ENCODE measurements at regions of chr7 and their contacts with region 1.

Region 1: DNA sequence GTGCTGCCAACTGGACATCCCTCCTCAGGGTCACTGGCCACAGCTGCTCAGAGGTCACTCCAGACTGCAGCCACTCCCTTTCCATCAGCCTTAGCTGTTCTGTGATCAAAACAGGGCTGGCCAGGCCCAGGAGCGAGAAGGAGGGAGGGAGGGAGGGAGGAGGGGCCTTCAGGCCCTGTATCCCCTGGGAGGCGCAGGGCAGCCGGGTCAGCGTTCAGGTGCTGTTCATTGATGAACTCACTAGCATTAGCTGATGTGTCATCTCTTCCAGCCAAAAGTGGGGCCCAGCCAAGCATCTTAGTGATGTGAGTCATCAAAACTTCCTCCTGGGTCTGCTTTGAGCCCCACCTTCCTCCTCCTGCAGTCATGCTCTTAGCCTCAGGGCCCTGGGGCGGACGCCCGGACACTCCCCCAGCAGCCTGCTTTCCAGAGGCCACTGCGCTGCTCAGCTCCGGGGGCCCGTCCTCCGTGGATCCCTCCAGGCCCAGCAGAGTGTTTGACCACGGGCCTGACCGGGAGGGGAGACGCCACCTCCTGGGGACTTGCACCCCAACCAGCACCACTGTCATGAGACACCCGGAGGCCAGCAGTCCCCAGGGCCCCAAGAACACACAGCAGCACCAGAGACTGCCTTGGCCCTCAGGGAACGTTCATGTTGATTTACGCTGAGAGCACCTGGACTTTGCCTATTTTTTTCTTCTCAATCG is 149.2 kb downstream of the PRKAG2 start:
- DNase-seq: peak; percentile 96

Region 2: GRCh38 chr7:151368136-151368571 is 359.6 kb before region 1 on chr7:
- in situ Hi-C with region 1: loop called (anchors 25 kb)
- DNase-seq: peak; percentile 76

Measured in Caki2 (cell line).